ENCODE measurements at regions of chr3 and their contacts with region 1.

Region 1: DNA sequence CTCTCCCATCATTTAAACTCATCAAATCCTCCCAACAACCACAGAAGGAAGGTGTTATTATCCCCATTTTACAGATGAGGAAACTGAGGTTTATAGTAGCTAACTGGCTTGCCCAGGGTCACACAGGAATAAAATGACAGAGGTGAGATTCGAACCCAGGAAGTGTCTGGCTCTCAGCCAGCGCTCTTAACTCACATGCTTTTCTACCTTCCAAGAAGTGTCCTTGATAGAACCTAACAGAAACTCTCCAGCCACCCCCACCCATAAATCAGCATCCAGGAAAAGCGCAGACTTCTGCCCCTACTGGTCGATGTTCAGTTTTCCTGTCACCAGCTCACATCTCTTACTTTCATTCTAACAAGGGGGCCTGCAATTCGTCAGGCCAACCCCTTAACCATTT is 51.7 kb downstream of the SPATA12 start:
- DNase-seq: no peak
- H3K4me3 Mint-ChIP-seq: no peak overlapping the region
- H3K27ac Mint-ChIP-seq: no peak overlapping the region
- H3K4me1 Mint-ChIP-seq: peaks cover 6% of the 10 kb centered on the region
- H3K27me3 Mint-ChIP-seq: peaks cover 6% of the 10 kb centered on the region

Region 2: GRCh38 chr3:56693750-56694149 is 418.5 kb before region 1 on chr3:
- CTCF ChIA-PET with region 1: no interaction called
- POLR2A ChIA-PET with region 1: no interaction called
- DNase-seq: no peak
- H3K4me3 Mint-ChIP-seq: peak overlapping the region; percentile 11
- H3K27ac Mint-ChIP-seq: peak overlapping the region; percentile 75
- H3K4me1 Mint-ChIP-seq: peaks cover 43% of the 10 kb centered on the region
- H3K27me3 Mint-ChIP-seq: no peaks in the 10 kb centered on the region

Region 3: GRCh38 chr3:57078344-57078634 is 33.9 kb before region 1 on chr3:
- CTCF ChIA-PET with region 1: no interaction called
- POLR2A ChIA-PET with region 1: no interaction called
- DNase-seq: peak; percentile 20
- H3K4me3 Mint-ChIP-seq: peak overlapping the region; percentile 51
- H3K27ac Mint-ChIP-seq: no peak overlapping the region
- H3K4me1 Mint-ChIP-seq: peaks cover 6% of the 10 kb centered on the region
- H3K27me3 Mint-ChIP-seq: peaks cover 59% of the 10 kb centered on the region

Region 4: GRCh38 chr3:57100046-57100695 is 12.0 kb before region 1 on chr3:
- CTCF ChIA-PET with region 1: interaction called, 13 read pairs
- POLR2A ChIA-PET with region 1: no interaction called
- DNase-seq: peak; percentile 67
- H3K4me3 Mint-ChIP-seq: no peak overlapping the region
- H3K27ac Mint-ChIP-seq: no peak overlapping the region
- H3K4me1 Mint-ChIP-seq: peaks cover 2% of the 10 kb centered on the region
- H3K27me3 Mint-ChIP-seq: no peaks in the 10 kb centered on the region

Region 5: GRCh38 chr3:57130571-57131209 is 18.5 kb after region 1 on chr3:
- CTCF ChIA-PET with region 1: no interaction called
- POLR2A ChIA-PET with region 1: no interaction called
- DNase-seq: no peak
- H3K4me3 Mint-ChIP-seq: no peak overlapping the region
- H3K27ac Mint-ChIP-seq: no peak overlapping the region
- H3K4me1 Mint-ChIP-seq: no peaks in the 10 kb centered on the region
- H3K27me3 Mint-ChIP-seq: peaks cover 8% of the 10 kb centered on the region